Activated T-helper 2 cell treated with anti-CD3 and anti-CD28 coated beads, Interferon-gamma antibody, Interleukin-2, Interleukin-4, amounts not matched to agents 10 μg/mL and 5 μg/mL and 100 μg/mL, durations not matched to agents 14 hours and 24 hours and 36 hours (primary cell): ENCODE measurements at regions of chr18 and their contacts with region 1.

Region 1: GRCh38 chr18:9971313-9971920 is 57.6 kb downstream of the VAPA start:
- DNase-seq: peak; percentile 49
- H3K4me3 Mint-ChIP-seq: no peak overlapping the region
- H3K27ac Mint-ChIP-seq: no peak overlapping the region
- H3K4me1 Mint-ChIP-seq: peaks cover 6% of the 10 kb centered on the region
- H3K27me3 Mint-ChIP-seq: peaks cover 35% of the 10 kb centered on the region

Region 2: DNA sequence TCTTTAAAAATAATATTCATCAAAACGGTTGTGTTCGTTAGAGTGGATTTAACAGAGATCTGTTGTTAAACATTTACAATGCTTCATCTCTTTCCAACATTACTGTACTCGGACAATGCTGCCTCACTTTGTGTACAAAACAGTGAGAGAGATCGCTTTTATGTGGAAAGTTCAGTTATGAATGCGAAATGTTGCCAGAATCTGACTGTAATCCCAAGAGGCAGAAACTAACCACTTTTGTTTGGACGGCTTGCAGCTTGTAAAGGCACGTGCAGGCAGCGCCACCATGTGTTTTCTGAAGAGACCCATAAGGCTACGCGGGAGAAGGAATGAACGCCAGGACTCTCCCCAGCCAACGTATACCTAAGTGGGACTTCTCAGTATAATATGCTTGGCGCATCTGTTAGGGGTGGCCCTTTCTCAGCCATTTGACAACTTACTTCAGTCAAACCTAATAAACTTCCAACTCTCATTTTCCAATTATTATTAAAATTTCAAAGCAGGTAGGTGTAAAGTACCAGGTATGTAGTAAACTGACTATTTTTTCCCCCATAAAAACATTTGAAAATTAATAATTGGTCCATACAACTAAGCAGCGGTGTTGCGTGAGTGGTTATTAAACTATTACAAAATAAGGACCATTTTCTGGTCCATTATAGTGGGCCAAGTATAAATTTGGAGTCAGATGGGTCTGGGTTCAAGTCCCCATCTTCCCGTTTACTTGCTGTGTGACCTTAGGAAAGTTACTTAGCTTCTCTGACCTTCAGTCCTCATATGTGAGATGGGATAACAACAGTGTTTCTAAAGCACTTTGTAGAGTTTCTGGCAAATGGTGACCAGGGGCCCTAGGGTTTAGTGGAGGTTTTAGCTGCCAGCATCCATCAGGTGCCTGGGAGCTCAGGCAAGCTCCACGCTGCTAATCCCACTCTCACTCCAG is 548.9 kb after region 1 on chr18:
- intact Hi-C with region 1: loop called (anchors 1 kb)
- DNase-seq: peak; percentile 24
- H3K4me3 Mint-ChIP-seq: no peak overlapping the region
- H3K27ac Mint-ChIP-seq: no peak overlapping the region
- H3K4me1 Mint-ChIP-seq: peaks cover 17% of the 10 kb centered on the region
- H3K27me3 Mint-ChIP-seq: peaks cover 38% of the 10 kb centered on the region